ENCODE measurements at regions of chr1 and their contacts with region 1.

Region 1: DNA sequence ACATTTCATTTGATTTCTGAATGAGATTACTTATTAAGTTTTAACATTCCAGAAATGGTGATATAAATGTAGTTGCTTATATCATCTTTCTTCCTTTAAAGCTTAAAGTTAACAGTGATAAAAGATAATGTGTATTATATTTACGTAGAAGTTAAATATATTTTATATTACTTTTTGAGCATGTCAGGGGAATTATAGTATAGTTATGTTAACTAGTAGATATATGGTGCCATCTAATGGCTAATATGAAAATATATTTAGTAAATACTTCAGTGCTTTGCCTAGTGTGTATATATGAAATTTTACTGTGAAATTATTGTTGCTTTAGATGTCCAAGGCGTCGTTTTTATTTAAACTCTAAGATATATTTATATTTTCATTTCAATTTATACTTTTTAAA is 51.5 kb downstream of the SYT14 start:
- DNase-seq: no peak

Region 2: DNA sequence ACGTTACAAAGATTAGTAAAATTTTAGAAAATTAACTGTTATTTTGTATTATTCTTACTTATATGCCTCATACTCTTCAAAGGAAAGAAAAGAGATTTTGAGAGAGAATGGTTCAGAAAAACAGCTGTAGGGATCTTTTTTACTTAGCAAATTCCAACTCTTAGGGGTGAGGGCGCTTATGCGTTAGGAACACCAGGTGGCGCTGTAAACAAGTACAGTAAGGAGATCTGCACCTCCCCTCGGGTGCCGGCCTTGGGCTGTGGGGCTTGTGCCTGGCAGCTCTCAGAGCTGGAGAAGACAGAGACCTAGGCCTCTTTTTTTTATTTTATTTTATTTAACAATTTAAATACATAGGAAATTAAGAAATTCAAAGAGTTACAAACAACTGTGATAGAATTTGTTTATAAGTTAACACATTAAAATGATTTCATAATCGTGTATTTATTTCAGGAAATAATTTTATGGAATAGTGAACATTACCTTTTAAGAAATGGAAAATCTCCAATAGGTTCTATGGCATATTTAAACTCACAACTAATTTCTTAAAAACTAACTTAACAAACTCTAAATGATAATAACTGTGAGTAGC is 129.1 kb before region 1 on chr1:
- in situ Hi-C with region 1: loop called (anchors 25 kb)
- DNase-seq: peak; percentile 68

Measured in KBM-7 (cell line).